ENCODE measurements at regions of chr6 and their contacts with region 1.

Region 1: DNA sequence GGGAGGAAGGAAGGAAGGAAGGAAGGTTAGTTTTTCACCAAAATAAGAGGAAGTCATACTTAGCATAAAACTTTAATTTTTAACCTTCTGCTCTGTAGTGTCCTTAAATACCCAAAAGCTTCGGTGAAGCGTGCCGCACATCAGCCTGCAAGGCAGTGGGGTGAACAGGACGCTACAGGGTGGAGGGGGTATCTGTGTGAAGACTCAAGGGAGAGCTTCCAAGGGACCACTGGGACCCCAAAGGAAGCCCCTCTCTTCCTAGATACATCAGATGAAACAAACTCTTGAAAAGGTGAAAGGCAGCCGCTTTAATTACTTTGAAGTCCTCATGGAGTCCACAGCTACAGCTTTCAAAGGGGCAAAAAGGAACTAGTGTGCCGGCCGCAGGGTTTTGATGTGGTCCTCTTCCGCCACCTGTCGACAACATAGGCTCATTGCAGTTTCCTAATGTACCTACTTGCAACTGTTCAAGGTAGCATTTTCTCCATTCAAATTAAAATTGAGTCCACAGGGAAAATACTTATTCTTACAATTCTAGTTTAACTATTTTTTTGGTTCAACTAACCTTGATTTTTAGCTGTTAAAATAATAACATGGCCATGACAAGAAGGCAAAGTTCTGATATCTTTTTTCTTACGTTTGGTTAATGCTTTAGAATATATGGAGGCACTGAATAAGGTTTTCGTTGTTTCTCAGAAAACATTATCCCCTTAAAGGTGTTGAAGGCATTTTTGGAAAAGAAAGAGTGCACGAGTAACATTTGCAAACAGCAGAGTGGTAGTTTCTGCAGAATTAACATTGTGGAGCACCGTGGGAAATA is 135.0 kb upstream of the RIPOR2 start:
- DNase-seq: peak; percentile 44 to 74
- ATAC-seq: peak; percentile 58 to 95 (median 84)
- H3K4me3 ChIP-seq: no peak overlapping the region
- H3K27ac ChIP-seq: peak overlapping the region in 2 of 10 donors; percentile 28 to 67
- H3K4me1 ChIP-seq: peaks cover 0 to 7% (median 0%) of the 10 kb centered on the region in 9 donors
- H3K27me3 ChIP-seq: no peaks in the 10 kb centered on the region
- CTCF ChIP-seq: peak; percentile 90 to 97 (median 93)

Region 2: DNA sequence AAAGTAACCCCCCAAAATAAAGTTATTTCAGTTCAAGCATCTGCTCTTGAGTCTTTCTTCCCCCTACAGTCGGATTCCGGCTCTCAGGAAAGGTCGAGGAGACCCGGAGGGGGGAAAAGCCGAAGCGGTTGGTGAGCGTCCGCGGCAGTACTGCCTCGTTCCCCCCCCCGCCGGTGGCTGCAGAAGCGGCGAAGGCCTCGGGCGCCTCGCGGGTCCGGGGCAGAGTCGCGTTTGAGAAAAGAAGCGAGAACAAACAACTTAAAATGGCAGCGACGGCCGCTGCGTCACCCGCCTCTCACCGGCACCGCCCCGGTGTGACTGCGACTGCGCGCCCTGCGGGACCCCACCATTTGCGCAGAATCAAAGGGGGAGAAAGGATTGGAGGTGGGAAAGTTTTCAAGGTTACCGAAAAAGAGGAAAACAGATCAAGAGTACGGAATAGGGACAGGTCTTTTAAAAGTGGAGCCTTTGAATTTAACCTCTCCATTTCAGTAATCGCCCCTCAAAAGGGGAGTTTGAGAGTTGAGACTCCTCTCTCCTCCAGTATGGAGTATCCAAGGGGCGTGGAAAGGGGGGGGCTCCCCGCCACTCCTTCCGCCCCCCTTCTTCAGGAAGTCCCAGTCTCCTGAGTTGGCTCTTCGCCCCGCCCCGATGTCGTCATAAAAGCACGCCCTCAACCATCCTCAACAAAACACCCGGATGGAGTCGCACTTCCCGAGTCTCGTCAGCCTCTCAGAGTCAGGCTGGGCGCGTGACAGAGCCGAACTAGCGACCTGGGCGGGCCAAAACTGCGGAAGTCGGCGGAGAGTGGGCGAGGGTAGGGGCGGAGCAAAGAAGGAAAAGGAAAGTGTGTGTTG is 349.9 kb before region 1 on chr6:
- intact Hi-C with region 1: loop called in 1 of 10 experiments (anchors 10 kb)
- DNase-seq: peak; percentile 100
- ATAC-seq: peak; percentile 93 to 97 (median 96)
- H3K4me3 ChIP-seq: peak overlapping the region; percentile 70 to 98 (median 86)
- H3K27ac ChIP-seq: peak overlapping the region; percentile 97 to 100 (median 99)
- H3K4me1 ChIP-seq: peaks cover 6 to 44% (median 33%) of the 10 kb centered on the region in 9 donors
- H3K27me3 ChIP-seq: no peaks in the 10 kb centered on the region
- CTCF ChIP-seq: no peak

Region 3: DNA sequence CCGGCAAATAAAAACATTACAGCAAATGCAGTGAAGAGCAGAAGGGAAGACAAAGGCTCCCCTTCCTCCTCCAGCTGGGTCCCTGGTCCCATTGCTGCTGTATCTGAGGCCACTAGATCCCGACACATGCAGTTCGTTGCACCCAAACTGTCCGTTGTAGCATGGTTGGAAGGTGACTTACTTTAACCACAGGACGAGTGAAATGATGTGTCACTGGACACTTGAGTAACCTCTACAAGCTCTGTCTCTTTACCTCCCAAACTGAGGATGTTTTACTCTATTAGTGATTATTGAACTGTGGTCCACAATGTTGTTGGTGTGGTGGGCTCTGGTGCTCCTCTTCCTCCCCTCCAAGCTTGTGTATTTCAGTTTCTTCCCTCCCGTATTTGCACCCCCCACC is 225.9 kb before region 1 on chr6:
- intact Hi-C with region 1: loop called in 1 of 10 experiments (anchors 5 kb)
- DNase-seq: no peak
- ATAC-seq: no peak
- H3K4me3 ChIP-seq: no peak overlapping the region
- H3K27ac ChIP-seq: no peak overlapping the region
- H3K4me1 ChIP-seq: peaks cover 0 to 7% (median 4%) of the 10 kb centered on the region in 9 donors
- H3K27me3 ChIP-seq: no peaks in the 10 kb centered on the region
- CTCF ChIP-seq: no peak

Region 4: DNA sequence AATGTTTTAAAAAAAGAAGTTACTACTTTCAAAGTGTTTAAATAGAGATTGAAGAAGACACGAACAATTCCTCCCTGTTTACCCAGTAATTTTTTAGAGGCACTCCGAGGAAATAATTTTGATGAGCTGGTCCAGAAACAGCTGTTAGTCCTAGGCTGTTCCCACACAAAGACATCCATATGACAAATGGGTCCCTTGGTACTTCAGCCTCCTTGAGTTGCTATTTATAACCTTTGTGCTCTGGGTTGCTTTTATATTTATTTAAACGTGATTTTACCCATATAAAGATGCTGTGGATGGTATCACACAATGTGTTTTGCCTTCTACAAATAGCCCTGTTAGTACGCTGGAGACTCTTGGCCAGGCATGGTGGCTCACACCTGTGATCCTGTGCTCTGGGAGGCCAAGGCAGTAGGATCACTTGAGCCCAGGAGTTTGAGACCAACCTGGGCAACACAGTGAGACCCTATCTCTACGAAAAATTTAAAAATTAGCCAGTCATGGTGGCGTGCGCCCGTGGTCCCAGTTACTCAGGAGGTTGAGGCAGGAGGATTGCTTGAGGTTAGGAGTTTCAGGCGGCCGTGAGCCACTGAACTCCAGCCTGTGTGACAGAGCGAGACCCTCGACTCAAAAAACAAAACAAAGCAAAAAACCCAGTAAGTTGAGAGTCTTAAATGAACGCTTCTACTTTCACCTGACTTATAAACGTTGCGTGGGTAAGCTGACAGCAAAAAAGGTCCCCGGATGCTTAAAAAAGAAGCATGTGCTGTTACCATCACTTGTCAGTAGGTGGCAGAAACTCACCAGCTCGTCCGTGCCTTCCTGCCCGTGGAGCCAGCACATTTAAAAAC is 215.1 kb before region 1 on chr6:
- intact Hi-C with region 1: loop called (anchors 1 to 5 kb)
- DNase-seq: peak; percentile 21 to 63
- ATAC-seq: peak; percentile 55 to 86 (median 70)
- H3K4me3 ChIP-seq: peak overlapping the region in 1 of 10 donors; percentile 4
- H3K27ac ChIP-seq: peak overlapping the region in 5 of 10 donors; percentile 3 to 88 (median 50)
- H3K4me1 ChIP-seq: peaks cover 0 to 56% (median 16%) of the 10 kb centered on the region in 9 donors
- H3K27me3 ChIP-seq: no peaks in the 10 kb centered on the region
- CTCF ChIP-seq: peak; percentile 83 to 96 (median 89)

Region 5: DNA sequence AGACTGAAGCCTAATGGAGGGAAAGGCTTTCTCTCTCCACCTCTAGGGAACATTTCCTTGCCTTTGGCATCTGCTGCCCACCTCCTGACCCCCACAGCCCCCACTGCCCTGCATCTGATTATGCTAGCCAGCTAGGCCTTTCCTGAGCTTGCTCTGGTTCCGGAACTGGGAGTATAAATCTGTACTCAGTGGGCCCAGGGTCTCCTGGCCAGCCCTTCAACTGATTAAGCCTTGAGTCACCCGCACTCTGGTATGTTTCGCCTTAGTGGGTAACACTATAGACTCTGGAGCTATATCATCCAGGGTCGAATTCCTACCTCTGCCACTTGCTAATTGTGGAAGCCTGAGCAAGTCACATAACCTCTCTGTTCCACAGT is 89.4 kb before region 1 on chr6:
- intact Hi-C with region 1: no loop called
- DNase-seq: no peak
- ATAC-seq: no peak
- H3K4me3 ChIP-seq: no peak overlapping the region
- H3K27ac ChIP-seq: no peak overlapping the region
- H3K4me1 ChIP-seq: peaks cover 0 to 14% (median 7%) of the 10 kb centered on the region in 9 donors
- H3K27me3 ChIP-seq: no peaks in the 10 kb centered on the region
- CTCF ChIP-seq: no peak

Region 6: GRCh38 chr6:24991810-24992467 is 78.8 kb before region 1 on chr6:
- intact Hi-C with region 1: loop called in 2 of 10 experiments (anchors 5 to 10 kb)
- DNase-seq: peak; percentile 17 to 42
- ATAC-seq: peak in 6 of 8 donors; percentile 73 to 87 (median 80)
- H3K4me3 ChIP-seq: no peak overlapping the region
- H3K27ac ChIP-seq: peak overlapping the region in 1 of 10 donors; percentile 57
- H3K4me1 ChIP-seq: peaks cover 0 to 22% (median 0%) of the 10 kb centered on the region in 9 donors
- H3K27me3 ChIP-seq: no peaks in the 10 kb centered on the region
- CTCF ChIP-seq: peak; percentile 52 to 84 (median 81)

Measured in heart right ventricle (tissue), 16 donors.